PC-9 (cell line): ENCODE measurements at regions of chr3 and their contacts with region 1.

Region 1: DNA sequence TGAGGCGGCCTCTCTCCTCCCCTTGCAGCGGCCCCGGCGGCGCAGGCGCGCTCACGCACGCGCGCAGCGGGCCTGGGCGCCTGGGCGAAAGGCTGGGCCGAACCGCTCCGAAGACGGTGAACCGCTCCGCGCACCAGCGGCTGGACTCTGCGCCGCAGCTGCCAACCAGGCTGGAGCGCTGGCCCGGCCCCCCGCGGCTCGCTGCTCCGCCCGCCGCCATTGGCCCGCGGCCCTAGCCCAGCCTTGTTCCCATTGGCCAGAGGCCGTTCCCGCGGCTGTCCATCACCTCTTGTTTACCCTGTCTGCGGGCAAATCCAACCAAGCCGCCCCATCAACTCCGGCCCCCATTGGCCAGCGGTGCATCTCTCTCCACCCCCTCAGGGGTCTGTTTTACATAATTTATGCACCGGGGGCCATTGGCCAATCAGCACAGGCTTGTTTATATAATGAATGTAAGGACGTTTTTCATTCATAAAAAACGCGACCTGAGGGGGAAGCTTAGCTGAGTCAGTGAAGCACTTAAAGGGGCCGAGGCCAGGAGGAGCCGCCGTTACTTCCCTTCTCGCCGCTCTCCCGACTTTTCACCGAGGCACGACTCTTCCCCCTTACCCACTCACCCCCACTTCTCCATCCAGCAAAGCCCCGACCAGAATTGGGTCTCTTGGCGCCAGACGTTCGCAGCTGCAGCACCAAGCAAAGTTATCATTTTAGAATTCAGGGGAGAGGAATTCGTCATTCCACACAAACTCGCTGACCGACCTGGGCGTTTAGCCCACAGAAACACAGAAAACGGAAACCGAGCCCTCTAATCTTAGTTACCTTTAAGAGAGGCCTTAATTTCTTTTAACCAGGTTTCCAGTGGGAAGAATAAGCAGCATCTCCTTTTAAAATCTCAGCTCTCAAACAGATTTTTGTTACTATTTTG is at the start of gene ETV5:
- DNase-seq: peak; percentile 100
- H3K4me3 ChIP-seq: peak within 1 kb of the TSS; percentile 87
- H3K27ac ChIP-seq: peak within 1 kb of the TSS; percentile 80
- H3K4me1 ChIP-seq: peaks cover 40% of the 10 kb centered on the region
- H3K27me3 ChIP-seq: no peaks in the 10 kb centered on the region
- CTCF ChIP-seq: no peak
- total RNA-seq, gene ETV5: 39.3 and 65.7 TPM in 2 replicates

Region 2: GRCh38 chr3:185677146-185677829 is 431.9 kb before region 1 on chr3:
- CTCF ChIA-PET with region 1: no interaction called
- POLR2A ChIA-PET with region 1: no interaction called
- intact Hi-C with region 1: loop called (anchors 10 kb)
- DNase-seq: peak; percentile 72 to 95
- H3K4me3 ChIP-seq: no peak overlapping the region
- H3K27ac ChIP-seq: peak overlapping the region; percentile 36
- H3K4me1 ChIP-seq: peaks cover 4% of the 10 kb centered on the region
- H3K27me3 ChIP-seq: no peaks in the 10 kb centered on the region
- CTCF ChIP-seq: peak; percentile 97

Region 3: GRCh38 chr3:185900226-185900625 is 209.0 kb before region 1 on chr3:
- CTCF ChIA-PET with region 1: no interaction called
- POLR2A ChIA-PET with region 1: no interaction called
- intact Hi-C with region 1: no loop called
- DNase-seq: peak; percentile 89 to 97
- H3K4me3 ChIP-seq: no peak overlapping the region
- H3K27ac ChIP-seq: peak overlapping the region; percentile 62
- H3K4me1 ChIP-seq: peaks cover 14% of the 10 kb centered on the region
- H3K27me3 ChIP-seq: no peaks in the 10 kb centered on the region
- CTCF ChIP-seq: no peak

Region 4: GRCh38 chr3:185929192-185930151 is 179.7 kb before region 1 on chr3:
- CTCF ChIA-PET with region 1: no interaction called
- POLR2A ChIA-PET with region 1: no interaction called
- intact Hi-C with region 1: loop called (anchors 5 kb)
- DNase-seq: peak in 1 of 2 experiments; percentile 74
- H3K4me3 ChIP-seq: peak overlapping the region; percentile 2; the same call in 1 of the 2 replicates
- H3K27ac ChIP-seq: peak overlapping the region; percentile 30
- H3K4me1 ChIP-seq: peaks cover 74% of the 10 kb centered on the region
- H3K27me3 ChIP-seq: no peaks in the 10 kb centered on the region
- CTCF ChIP-seq: no peak

Region 5: GRCh38 chr3:186002884-186003472 is 106.2 kb before region 1 on chr3:
- CTCF ChIA-PET with region 1: no interaction called
- POLR2A ChIA-PET with region 1: no interaction called
- intact Hi-C with region 1: no loop called
- DNase-seq: peak in 1 of 2 experiments; percentile 56
- H3K4me3 ChIP-seq: no peak overlapping the region
- H3K27ac ChIP-seq: no peak overlapping the region
- H3K4me1 ChIP-seq: no peaks in the 10 kb centered on the region
- H3K27me3 ChIP-seq: no peaks in the 10 kb centered on the region
- CTCF ChIP-seq: peak; percentile 57

Region 6: DNA sequence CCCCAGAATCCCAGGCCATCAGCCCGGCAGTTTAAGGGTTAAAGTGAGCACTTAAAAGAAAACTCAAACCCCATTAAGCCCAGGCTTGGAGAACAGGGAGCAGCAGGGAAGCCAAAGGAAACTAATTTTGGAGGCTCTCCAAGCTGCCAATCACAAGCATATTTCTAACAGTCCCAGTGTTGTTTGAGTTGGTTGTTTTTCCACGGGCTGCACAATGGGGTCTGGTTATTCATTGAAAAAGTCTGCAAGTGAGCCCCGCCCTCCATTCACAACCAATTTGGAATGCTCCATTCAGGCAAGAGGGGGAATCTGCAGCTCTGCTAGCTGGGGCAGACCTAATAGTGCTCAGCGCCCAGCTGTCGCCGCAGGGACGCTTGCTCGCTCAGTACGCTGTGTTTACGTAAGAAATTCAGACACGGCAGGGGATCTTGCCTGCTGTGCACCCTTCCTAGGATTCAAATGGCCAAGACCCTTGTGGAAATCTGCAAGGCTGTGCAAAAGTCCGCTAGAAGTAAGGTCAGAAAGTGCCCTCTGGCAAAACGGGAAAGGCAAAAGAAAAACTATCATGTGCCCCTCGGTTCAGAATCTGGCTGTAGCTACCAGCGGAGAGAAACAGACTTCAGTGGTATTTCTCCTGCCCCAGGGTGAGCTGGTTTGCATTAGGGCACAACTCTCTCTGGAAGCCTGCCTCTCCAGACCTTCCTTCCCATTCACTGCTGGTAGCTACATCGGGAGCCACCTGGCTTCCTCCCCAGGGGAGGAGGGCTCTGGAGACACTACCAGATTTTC is 11.3 kb before region 1 on chr3:
- CTCF ChIA-PET with region 1: no interaction called
- POLR2A ChIA-PET with region 1: no interaction called
- intact Hi-C with region 1: loop called (anchors 1 kb)
- DNase-seq: peak; percentile 93 to 95
- H3K4me3 ChIP-seq: peak overlapping the region; percentile 52
- H3K27ac ChIP-seq: peak overlapping the region; percentile 53
- H3K4me1 ChIP-seq: peaks cover 24% of the 10 kb centered on the region
- H3K27me3 ChIP-seq: no peaks in the 10 kb centered on the region
- CTCF ChIP-seq: no peak

Region 7: GRCh38 chr3:186217820-186218164 is 108.6 kb after region 1 on chr3:
- CTCF ChIA-PET with region 1: no interaction called
- POLR2A ChIA-PET with region 1: no interaction called
- intact Hi-C with region 1: loop called (anchors 5 kb)
- DNase-seq: peak; percentile 20 to 58
- H3K4me3 ChIP-seq: no peak overlapping the region
- H3K27ac ChIP-seq: no peak overlapping the region
- H3K4me1 ChIP-seq: 0 out of 2 replicates have a peak, but pooled peaks cover 3% of the 10 kb centered on the region
- H3K27me3 ChIP-seq: no peaks in the 10 kb centered on the region
- CTCF ChIP-seq: no peak

Region 8: DNA sequence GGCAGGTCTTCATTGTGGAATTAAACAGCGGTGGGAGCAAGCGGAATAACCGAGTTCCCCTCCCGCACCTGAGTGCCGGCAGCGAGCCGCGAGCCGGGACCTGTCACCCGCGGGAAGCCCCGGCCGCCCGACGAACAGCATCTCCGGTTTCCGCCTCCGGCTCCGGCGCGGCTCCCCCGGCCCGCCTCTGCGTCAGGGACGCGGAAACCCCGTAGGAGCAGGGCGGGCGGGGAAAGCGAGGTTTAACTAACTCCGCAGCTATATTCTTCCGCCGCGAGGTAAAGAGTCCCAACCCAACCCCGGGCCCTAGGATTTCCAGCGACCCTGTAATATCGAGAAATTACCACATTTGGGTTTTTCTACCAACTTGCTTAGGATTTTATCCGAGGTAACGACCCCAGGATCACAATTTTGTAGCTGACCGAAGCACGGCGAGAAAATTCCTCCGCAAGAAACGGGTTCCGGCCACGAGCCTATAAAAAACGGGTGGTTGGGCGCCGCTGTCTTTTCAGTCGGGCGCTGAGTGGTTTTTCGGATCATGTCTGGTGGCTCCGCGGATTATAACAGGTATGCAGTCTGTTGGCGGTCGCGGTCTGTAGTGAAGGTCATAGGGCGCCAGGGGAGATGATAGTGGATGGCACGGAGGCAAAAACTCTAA is 674.0 kb after region 1 on chr3 and contains the start of gene EIF4A2:
- CTCF ChIA-PET with region 1: no interaction called
- POLR2A ChIA-PET with region 1: no interaction called
- intact Hi-C with region 1: loop called (anchors 5 kb)
- DNase-seq: peak; percentile 85 to 95
- H3K4me3 ChIP-seq: peak within 1 kb of the TSS; percentile 92
- H3K27ac ChIP-seq: peak within 1 kb of the TSS; percentile 93
- H3K4me1 ChIP-seq: peaks cover 34% of the 10 kb centered on the region
- H3K27me3 ChIP-seq: no peaks in the 10 kb centered on the region
- CTCF ChIP-seq: no peak
- total RNA-seq, gene EIF4A2: 446 and 618 TPM in 2 replicates